A549 (cell line): ENCODE measurements at regions of chr14 and their contacts with region 1.

Region 1: DNA sequence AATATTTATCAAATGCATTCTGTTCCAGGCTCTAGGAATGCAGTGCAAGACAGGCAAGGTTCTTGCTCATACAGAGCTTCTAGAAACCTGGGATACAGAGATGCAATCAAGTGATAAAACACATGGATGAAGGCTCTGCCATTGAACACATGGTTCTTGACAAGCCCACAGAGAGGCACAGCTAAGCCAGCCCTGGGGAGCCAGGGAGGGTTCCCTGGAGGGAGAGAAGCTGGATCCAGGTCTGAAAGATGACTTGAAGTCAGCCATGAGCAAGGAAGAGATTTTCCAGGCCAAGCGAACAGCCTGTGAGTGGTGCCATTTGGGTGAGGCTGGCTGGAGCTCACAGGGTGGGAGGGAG is 66.2 kb downstream of the IRF2BPL start:
- DNase-seq: no peak
- ATAC-seq: peak; percentile 21 to 25; a peak in 5 of 6 replicates
- H3K4me3 ChIP-seq: peak overlapping the region; percentile 30
- H3K27ac ChIP-seq: peak overlapping the region; percentile 96 to 100
- H3K4me1 ChIP-seq: peaks cover 52% of the 10 kb centered on the region
- CTCF ChIP-seq: no peak
- EP300 ChIP-seq: no peak
- POLR2A ChIP-seq: no peak
- RAD21 ChIP-seq: no peak

Region 2: GRCh38 chr14:76947078-76947837 is 15.0 kb before region 1 on chr14:
- CTCF ChIA-PET with region 1: interaction called, 12 read pairs
- POLR2A ChIA-PET with region 1: interaction called, 11 read pairs
- DNase-seq: peak; percentile 90 to 95
- ATAC-seq: peak; percentile 88 to 89
- H3K4me3 ChIP-seq: no peak overlapping the region
- H3K27ac ChIP-seq: peak overlapping the region; percentile 96 to 100
- H3K4me1 ChIP-seq: peaks cover 71% of the 10 kb centered on the region
- CTCF ChIP-seq: peak; percentile 56; the same call in 2 of the 3 replicates
- EP300 ChIP-seq: peak in 1 of 2 experiments; percentile 59; a peak in 1 of 5 replicates
- POLR2A ChIP-seq: no peak
- RAD21 ChIP-seq: peak; percentile 61 to 82

Region 3: DNA sequence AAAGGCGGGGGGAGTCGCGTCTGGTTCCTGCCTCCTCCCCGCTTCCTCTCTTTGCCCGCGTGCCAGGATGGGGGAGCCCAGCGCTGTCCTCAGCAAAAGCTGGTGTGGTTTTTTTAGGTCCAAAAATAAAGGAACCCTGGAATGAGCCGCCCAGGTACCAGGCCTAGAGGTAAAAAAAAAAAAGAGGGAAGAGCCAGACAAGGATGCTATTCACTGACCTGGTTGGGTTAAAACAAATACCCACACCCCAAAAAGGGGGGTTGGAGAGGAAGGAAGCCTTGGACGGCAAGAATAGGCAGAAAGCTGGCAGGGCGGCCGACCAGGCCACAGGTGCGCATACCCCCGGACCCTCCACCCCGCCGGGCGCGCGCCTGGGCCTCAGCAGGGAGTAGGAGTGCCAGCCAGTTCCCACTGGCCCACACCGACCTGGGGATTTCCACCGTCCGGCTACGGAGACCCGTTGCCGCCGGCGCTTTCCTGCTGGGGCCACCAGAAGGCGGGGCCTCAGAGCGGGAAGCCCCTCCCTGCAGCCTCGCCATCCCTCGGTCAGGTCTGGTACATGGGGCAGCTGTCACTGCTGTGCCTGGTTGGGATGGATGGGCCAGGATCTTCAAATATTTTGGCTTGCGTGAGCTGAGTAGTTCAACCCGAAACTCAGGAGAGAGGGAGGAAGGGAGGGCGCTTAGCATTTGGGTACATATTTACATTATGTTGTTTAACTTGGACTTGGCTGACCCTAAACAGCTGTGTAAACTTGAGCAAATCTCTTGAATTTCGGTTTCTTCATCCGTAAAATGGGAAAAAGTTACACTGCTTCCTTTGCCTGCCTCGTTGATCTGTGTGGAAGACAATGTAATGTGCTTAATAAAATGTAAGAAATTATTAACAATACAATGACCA is 71.6 kb after region 1 on chr14:
- CTCF ChIA-PET with region 1: interaction called, 16 read pairs
- POLR2A ChIA-PET with region 1: interaction called, 32 read pairs
- DNase-seq: peak; percentile 92 to 94
- ATAC-seq: peak; percentile 77 to 79
- H3K4me3 ChIP-seq: peak overlapping the region; percentile 49
- H3K27ac ChIP-seq: peak overlapping the region; percentile 95 to 99
- H3K4me1 ChIP-seq: peaks cover 78% of the 10 kb centered on the region
- CTCF ChIP-seq: no peak
- EP300 ChIP-seq: peak; percentile 66 to 75; a peak in 2 of 5 replicates
- POLR2A ChIP-seq: peak; percentile 38
- RAD21 ChIP-seq: peak; percentile 23 to 28; a peak in 2 of 5 replicates